CD4-positive, alpha-beta memory T cell (primary cell): ENCODE measurements at regions of chr11 and their contacts with region 1.

Region 1: DNA sequence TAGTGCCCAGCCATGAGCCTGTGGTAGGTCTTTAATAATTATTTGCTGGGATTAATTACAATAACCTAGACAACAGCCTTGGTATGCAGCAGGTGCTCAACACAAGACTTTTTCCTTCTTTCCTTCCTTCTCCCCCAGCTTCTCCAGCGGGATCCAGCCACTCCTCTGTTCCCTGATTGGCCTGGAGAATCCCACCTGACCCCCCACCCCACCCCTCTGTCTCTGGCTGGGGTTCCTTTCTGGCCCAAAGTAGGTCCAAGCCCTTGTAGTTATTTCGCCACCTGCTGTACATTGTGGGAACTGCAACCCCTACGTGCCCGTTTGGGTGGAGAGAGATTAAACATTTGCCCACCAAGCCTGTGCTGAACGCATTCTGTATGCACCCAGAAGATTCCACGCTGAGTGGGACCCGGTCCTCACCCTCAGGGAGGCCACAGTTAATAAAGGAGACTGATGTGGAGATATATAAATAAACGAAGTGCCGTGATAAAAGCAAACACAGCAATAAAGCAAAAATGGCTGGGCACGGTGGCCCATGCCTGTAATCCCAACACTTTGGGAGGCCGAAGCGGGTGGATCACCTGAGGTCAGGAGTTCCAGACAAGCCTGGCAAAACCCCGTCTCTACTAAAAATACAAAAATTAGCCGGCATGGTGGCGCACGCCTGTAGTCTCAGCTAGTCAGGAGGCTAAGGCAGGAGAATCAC is 32.1 kb upstream of the DGKZ start:
- DNase-seq: peak; percentile 57 to 73 (median 66)
- H3K4me3 ChIP-seq: no peak overlapping the region
- H3K4me3 Mint-ChIP-seq: peak overlapping the region in 1 of 8 donors; percentile 26
- H3K27ac ChIP-seq: no peak overlapping the region
- H3K27ac Mint-ChIP-seq: peak overlapping the region in 1 of 7 donors; percentile 65
- H3K4me1 ChIP-seq: peaks cover 17% of the 10 kb centered on the region
- H3K4me1 Mint-ChIP-seq: peaks cover 11 to 28% (median 20%) of the 10 kb centered on the region in 4 donors
- H3K27me3 ChIP-seq: no peaks in the 10 kb centered on the region
- H3K27me3 Mint-ChIP-seq: no peaks in the 10 kb centered on the region

Region 2: DNA sequence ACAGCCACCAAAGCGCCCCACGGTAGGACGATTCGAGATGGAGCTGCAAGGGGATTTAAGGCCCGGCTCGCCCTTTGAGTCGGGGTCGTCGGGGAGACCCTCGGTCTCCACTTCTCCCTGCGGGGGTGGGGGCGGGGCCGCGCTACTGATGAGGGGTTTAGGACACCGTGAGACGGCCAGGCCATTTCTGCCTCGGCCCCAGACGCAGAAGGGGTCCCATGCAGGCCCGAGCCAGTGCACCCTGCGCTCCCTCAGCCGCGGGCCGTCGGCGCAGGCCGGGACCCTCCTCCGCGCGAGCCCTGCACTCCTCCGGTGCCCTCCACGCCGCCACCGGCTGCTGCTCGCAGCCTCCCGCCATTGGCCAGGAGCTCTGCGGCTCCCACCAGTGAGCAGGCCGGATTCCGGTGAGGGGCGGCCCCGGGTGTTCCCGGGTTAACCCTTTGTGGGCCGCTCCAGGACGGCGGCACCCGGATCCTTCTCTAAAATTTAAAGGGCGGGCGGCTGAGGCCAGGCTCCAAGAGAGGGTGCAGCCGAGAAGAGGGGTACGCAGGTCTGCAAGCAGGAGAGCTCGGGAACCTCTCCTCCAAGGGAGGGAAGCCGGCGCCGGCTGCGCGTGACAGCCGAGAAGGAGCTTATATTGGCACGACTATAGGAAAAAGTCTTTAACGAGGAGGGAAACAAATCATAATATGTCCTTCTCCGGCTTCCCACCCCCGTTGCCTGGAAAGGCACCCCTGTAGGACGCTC is 19.7 kb before region 1 on chr11:
- CTCF ChIA-PET with region 1: interaction called, 18 read pairs
- POLR2A ChIA-PET with region 1: no interaction called
- intact Hi-C with region 1: no loop called
- DNase-seq: peak; percentile 73 to 79 (median 75)
- H3K4me3 ChIP-seq: peak overlapping the region; percentile 5 to 64
- H3K4me3 Mint-ChIP-seq: peak overlapping the region; percentile 80 to 93 (median 86)
- H3K27ac ChIP-seq: no peak overlapping the region
- H3K27ac Mint-ChIP-seq: peak overlapping the region in 1 of 7 donors; percentile 72
- H3K4me1 ChIP-seq: peaks cover 10% of the 10 kb centered on the region
- H3K4me1 Mint-ChIP-seq: peaks cover 3 to 11% (median 5%) of the 10 kb centered on the region in 4 donors
- H3K27me3 ChIP-seq: peaks cover 7% of the 10 kb centered on the region
- H3K27me3 Mint-ChIP-seq: peaks cover 2 to 7% of the 10 kb centered on the region in 2 donors

Region 3: DNA sequence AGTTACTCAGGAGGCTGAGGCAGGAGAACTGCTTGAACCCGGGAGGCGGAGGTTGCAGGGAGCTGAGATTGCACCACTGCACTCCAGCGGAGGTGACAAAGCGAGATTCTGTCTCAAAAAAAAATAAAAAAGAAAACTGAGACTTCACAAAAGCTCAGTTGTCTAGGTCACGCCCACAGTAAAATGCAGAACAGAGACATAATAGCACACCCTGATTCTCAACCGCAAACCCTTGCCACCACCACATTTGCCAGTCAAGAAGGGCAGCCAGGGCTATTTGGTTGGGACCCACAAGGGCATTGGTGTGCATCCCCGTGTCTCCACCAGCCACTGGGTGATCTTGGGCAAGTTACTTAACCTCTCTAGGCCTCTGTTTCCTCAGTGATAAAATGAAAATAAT is 12.3 kb before region 1 on chr11:
- CTCF ChIA-PET with region 1: interaction called, 44 read pairs
- POLR2A ChIA-PET with region 1: no interaction called
- intact Hi-C with region 1: no loop called
- DNase-seq: no peak
- H3K4me3 ChIP-seq: no peak overlapping the region
- H3K4me3 Mint-ChIP-seq: no peak overlapping the region
- H3K27ac ChIP-seq: no peak overlapping the region
- H3K27ac Mint-ChIP-seq: no peak overlapping the region
- H3K4me1 ChIP-seq: no peaks in the 10 kb centered on the region
- H3K4me1 Mint-ChIP-seq: peaks cover 0 to 2% (median 0%) of the 10 kb centered on the region in 4 donors
- H3K27me3 ChIP-seq: peaks cover 4% of the 10 kb centered on the region
- H3K27me3 Mint-ChIP-seq: peaks cover 0 to 3% of the 10 kb centered on the region in 2 donors

Region 4: GRCh38 chr11:46332568-46333393 is 17.6 kb after region 1 on chr11:
- CTCF ChIA-PET with region 1: interaction called, 187 read pairs
- POLR2A ChIA-PET with region 1: interaction called, 53 read pairs
- intact Hi-C with region 1: no loop called
- DNase-seq: peak in 4 of 5 donors; percentile 30 to 59 (median 44)
- H3K4me3 ChIP-seq: peak overlapping the region; percentile 15 to 54
- H3K4me3 Mint-ChIP-seq: peak overlapping the region; percentile 87 to 96 (median 90)
- H3K27ac ChIP-seq: peak overlapping the region; percentile 42
- H3K27ac Mint-ChIP-seq: peak overlapping the region in 6 of 7 donors; percentile 84 to 98 (median 96)
- H3K4me1 ChIP-seq: peaks cover 74% of the 10 kb centered on the region
- H3K4me1 Mint-ChIP-seq: peaks cover 33 to 74% (median 61%) of the 10 kb centered on the region in 4 donors
- H3K27me3 ChIP-seq: no peaks in the 10 kb centered on the region
- H3K27me3 Mint-ChIP-seq: no peaks in the 10 kb centered on the region